Activated B cell treated with CpG ODN at 0.5 μM for 24 hours (primary cell): ENCODE measurements at regions of chr16 and their contacts with region 1.

Region 1: GRCh38 chr16:88941913-88942909 is 34.8 kb downstream of the CBFA2T3 start:
- DNase-seq: peak; percentile 77
- ATAC-seq: peak; percentile 67
- H3K4me3 Mint-ChIP-seq: peak overlapping the region; percentile 79
- H3K27ac Mint-ChIP-seq: peak overlapping the region; percentile 66
- H3K4me1 Mint-ChIP-seq: peaks cover 46% of the 10 kb centered on the region
- H3K27me3 Mint-ChIP-seq: no peaks in the 10 kb centered on the region
- CTCF ChIP-seq: peak; percentile 54

Region 2: GRCh38 chr16:88925101-88925887 is 16.9 kb before region 1 on chr16:
- CTCF ChIA-PET with region 1: interaction called, 3 read pairs
- POLR2A ChIA-PET with region 1: interaction called, 4 read pairs
- intact Hi-C with region 1: loop called (anchors 1 kb)
- DNase-seq: peak; percentile 70
- ATAC-seq: peak; percentile 96
- H3K4me3 Mint-ChIP-seq: no peak overlapping the region
- H3K27ac Mint-ChIP-seq: peak overlapping the region; percentile 24
- H3K4me1 Mint-ChIP-seq: peaks cover 63% of the 10 kb centered on the region
- H3K27me3 Mint-ChIP-seq: no peaks in the 10 kb centered on the region
- CTCF ChIP-seq: no peak

Region 3: GRCh38 chr16:88983771-88984687 is 41.8 kb after region 1 on chr16:
- CTCF ChIA-PET with region 1: no interaction called
- POLR2A ChIA-PET with region 1: interaction called, 9 read pairs
- intact Hi-C with region 1: loop called (anchors 2 kb)
- DNase-seq: peak; percentile 82
- ATAC-seq: peak; percentile 82
- H3K4me3 Mint-ChIP-seq: peak overlapping the region; percentile 76
- H3K27ac Mint-ChIP-seq: peak overlapping the region; percentile 82
- H3K4me1 Mint-ChIP-seq: peaks cover 80% of the 10 kb centered on the region
- H3K27me3 Mint-ChIP-seq: no peaks in the 10 kb centered on the region
- CTCF ChIP-seq: no peak

Region 4: GRCh38 chr16:89115216-89115861 is 173.1 kb after region 1 on chr16:
- CTCF ChIA-PET with region 1: no interaction called
- POLR2A ChIA-PET with region 1: no interaction called
- intact Hi-C with region 1: loop called (anchors 1 kb)
- DNase-seq: peak; percentile 64
- ATAC-seq: peak; percentile 84
- H3K4me3 Mint-ChIP-seq: peak overlapping the region; percentile 78
- H3K27ac Mint-ChIP-seq: peak overlapping the region; percentile 95
- H3K4me1 Mint-ChIP-seq: peaks cover 9% of the 10 kb centered on the region
- H3K27me3 Mint-ChIP-seq: no peaks in the 10 kb centered on the region
- CTCF ChIP-seq: no peak